ENCODE measurements at regions of chr5 and their contacts with region 1.

Region 1: GRCh38 chr5:21152610-21153009 is 1164.6 kb upstream of the CDH18 start:
- DNase-seq: no peak
- H3K4me3 ChIP-seq: no peak overlapping the region
- H3K27ac ChIP-seq: no peak overlapping the region
- H3K4me1 ChIP-seq: no peaks in the 10 kb centered on the region
- H3K27me3 ChIP-seq: no peaks in the 10 kb centered on the region
- CTCF ChIP-seq: no peak
- POLR2A ChIP-seq: no peak

Region 2: GRCh38 chr5:21165344-21165743 is 12.7 kb after region 1 on chr5:
- intact Hi-C with region 1: loop called (anchors 2 kb)
- DNase-seq: no peak
- H3K4me3 ChIP-seq: no peak overlapping the region
- H3K27ac ChIP-seq: no peak overlapping the region
- H3K4me1 ChIP-seq: no peaks in the 10 kb centered on the region
- H3K27me3 ChIP-seq: no peaks in the 10 kb centered on the region
- CTCF ChIP-seq: no peak
- POLR2A ChIP-seq: no peak

Region 3: GRCh38 chr5:21654556-21654955 is 501.9 kb after region 1 on chr5:
- intact Hi-C with region 1: no loop called
- DNase-seq: no peak
- H3K4me3 ChIP-seq: no peak overlapping the region
- H3K27ac ChIP-seq: no peak overlapping the region
- H3K4me1 ChIP-seq: no peaks in the 10 kb centered on the region
- H3K27me3 ChIP-seq: no peaks in the 10 kb centered on the region
- CTCF ChIP-seq: no peak
- POLR2A ChIP-seq: no peak

Region 4: DNA sequence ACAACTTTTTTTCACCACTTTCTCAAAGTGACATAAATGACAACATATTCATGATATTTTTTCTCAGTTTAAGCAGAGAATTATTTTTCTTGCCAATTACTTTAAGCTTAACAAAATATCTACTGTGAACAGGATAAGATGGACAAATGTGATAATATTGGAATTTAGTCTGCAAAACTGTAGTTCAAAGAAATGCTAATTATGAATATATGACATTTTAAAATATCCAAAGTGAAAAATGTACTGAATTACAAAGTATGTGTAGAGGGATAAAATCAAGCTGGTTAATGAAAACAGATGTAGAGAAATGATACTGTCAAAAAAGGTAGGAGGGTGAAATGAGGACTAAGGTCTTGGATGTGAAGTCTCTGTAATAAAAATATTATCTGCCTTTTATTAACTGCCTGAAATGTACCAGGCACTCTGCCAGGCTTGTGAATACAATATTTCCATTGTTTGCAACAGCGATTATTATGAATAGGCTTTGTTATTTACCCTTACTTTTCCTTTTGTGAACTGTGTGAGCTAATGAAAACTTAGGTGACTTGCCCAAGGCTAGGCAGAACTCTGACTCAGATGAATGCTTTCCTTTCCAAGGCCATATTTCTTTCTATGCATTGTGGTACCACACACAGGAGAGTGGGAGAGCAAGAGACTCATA is 1496.3 kb after region 1 on chr5:
- intact Hi-C with region 1: no loop called
- DNase-seq: peak in 1 of 2 donors; percentile 44
- H3K4me3 ChIP-seq: no peak overlapping the region
- H3K27ac ChIP-seq: peak overlapping the region; percentile 23 to 38
- H3K4me1 ChIP-seq: peaks cover 0 to 3% of the 10 kb centered on the region in 2 donors
- H3K27me3 ChIP-seq: no peaks in the 10 kb centered on the region
- CTCF ChIP-seq: no peak
- POLR2A ChIP-seq: no peak

Measured in breast epithelium (tissue), 4 donors.